ENCODE measurements at regions of chr15 and their contacts with region 1.

Region 1: GRCh38 chr15:91258425-91258779 is 158.3 kb downstream of the SV2B start:
- DNase-seq: peak; percentile 10
- H3K4me3 Mint-ChIP-seq: no peak overlapping the region
- H3K27ac Mint-ChIP-seq: no peak overlapping the region
- H3K4me1 Mint-ChIP-seq: no peaks in the 10 kb centered on the region
- H3K27me3 Mint-ChIP-seq: peaks cover 3% of the 10 kb centered on the region

Region 2: GRCh38 chr15:91246998-91247397 is 11.4 kb before region 1 on chr15:
- CTCF ChIA-PET with region 1: interaction called, 17 read pairs
- intact Hi-C with region 1: no loop called
- DNase-seq: no peak
- H3K4me3 Mint-ChIP-seq: no peak overlapping the region
- H3K27ac Mint-ChIP-seq: no peak overlapping the region
- H3K4me1 Mint-ChIP-seq: no peaks in the 10 kb centered on the region
- H3K27me3 Mint-ChIP-seq: peaks cover 2% of the 10 kb centered on the region

Measured in activated naive CD4-positive, alpha-beta T cell treated with anti-CD3 and anti-CD28 coated beads for 36 hours (primary cell).